ENCODE measurements at regions of chr9 and their contacts with region 1.

Region 1: GRCh38 chr9:124710766-124711165 is 60.3 kb downstream of the NR6A1 start:
- DNase-seq: no peak
- H3K4me3 ChIP-seq: no peak overlapping the region
- H3K27ac ChIP-seq: no peak overlapping the region
- H3K4me1 ChIP-seq: peaks cover 10% of the 10 kb centered on the region
- H3K27me3 ChIP-seq: no peaks in the 10 kb centered on the region
- CTCF ChIP-seq: no peak

Region 2: GRCh38 chr9:124617471-124618141 is 93.2 kb before region 1 on chr9:
- intact Hi-C with region 1: loop called (anchors 2 kb)
- DNase-seq: peak; percentile 73
- H3K4me3 ChIP-seq: no peak overlapping the region
- H3K27ac ChIP-seq: no peak overlapping the region
- H3K4me1 ChIP-seq: peaks cover 6% of the 10 kb centered on the region
- H3K27me3 ChIP-seq: no peaks in the 10 kb centered on the region
- CTCF ChIP-seq: peak; percentile 91

Region 3: DNA sequence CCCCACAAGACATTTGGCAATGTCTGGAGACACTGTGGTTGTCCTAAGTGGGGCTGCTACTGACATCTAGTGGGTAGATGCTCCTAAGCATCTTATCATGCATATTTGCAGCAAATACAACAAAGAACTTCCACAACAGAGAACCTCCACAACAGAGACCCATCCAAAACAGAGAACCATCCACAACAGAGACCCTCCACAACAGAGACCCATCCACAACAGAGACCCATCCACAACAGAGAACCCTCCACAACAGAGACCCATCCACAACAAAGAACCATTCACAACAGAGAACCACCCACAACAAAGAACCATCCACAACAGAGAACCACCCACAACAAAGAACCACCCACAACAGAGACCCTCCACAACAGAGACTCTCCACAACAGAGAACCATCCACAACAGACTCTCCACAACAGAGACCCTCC is 184.0 kb after region 1 on chr9:
- intact Hi-C with region 1: no loop called
- DNase-seq: no peak
- H3K4me3 ChIP-seq: no peak overlapping the region
- H3K27ac ChIP-seq: no peak overlapping the region
- H3K4me1 ChIP-seq: no peaks in the 10 kb centered on the region
- H3K27me3 ChIP-seq: no peaks in the 10 kb centered on the region
- CTCF ChIP-seq: peak; percentile 52